CD8-positive, alpha-beta T cell (primary cell): ENCODE measurements at regions of chr17 and their contacts with region 1.

Region 1: GRCh38 chr17:51046514-51047384 is 73.9 kb downstream of the SPAG9 start:
- DNase-seq: no peak
- ATAC-seq: no peak
- H3K4me3 ChIP-seq: no peak overlapping the region
- H3K4me3 Mint-ChIP-seq: no peak overlapping the region
- H3K27ac ChIP-seq: no peak overlapping the region
- H3K27ac Mint-ChIP-seq: no peak overlapping the region
- H3K4me1 ChIP-seq: no peaks in the 10 kb centered on the region
- H3K4me1 Mint-ChIP-seq: peaks cover 13% of the 10 kb centered on the region
- H3K27me3 ChIP-seq: no peaks in the 10 kb centered on the region
- H3K27me3 Mint-ChIP-seq: no peaks in the 10 kb centered on the region
- CTCF ChIP-seq: no peak

Region 2: GRCh38 chr17:50967795-50968194 is 79.0 kb before region 1 on chr17:
- CTCF ChIA-PET with region 1: no interaction called
- POLR2A ChIA-PET with region 1: no interaction called
- intact Hi-C with region 1: no loop called
- DNase-seq: no peak
- ATAC-seq: no peak
- H3K4me3 ChIP-seq: no peak overlapping the region
- H3K4me3 Mint-ChIP-seq: no peak overlapping the region
- H3K27ac ChIP-seq: no peak overlapping the region
- H3K27ac Mint-ChIP-seq: no peak overlapping the region
- H3K4me1 ChIP-seq: no peaks in the 10 kb centered on the region
- H3K4me1 Mint-ChIP-seq: peaks cover 4% of the 10 kb centered on the region
- H3K27me3 ChIP-seq: no peaks in the 10 kb centered on the region
- H3K27me3 Mint-ChIP-seq: no peaks in the 10 kb centered on the region
- CTCF ChIP-seq: no peak

Region 3: DNA sequence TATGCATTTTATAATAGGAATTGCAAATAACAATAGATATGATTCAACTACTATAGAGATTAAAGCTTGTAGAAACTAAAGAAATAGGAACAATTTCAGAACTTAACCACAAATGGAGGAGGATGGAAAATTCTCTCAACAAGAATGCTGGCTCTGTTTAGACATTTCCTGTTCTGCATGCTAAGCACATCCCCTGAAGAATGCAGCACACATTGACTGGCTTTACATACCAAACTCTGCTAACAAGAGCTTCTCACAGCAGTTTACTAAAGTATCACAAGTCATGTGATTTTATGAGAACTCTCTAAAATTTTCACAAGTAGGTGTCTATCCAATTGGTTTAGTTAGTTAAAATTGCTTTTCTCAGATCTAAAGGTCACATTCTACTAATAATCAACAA is 11.3 kb before region 1 on chr17:
- CTCF ChIA-PET with region 1: interaction called, 4 read pairs
- POLR2A ChIA-PET with region 1: no interaction called
- intact Hi-C with region 1: loop called in 1 of 2 experiments (anchors 2 kb)
- DNase-seq: no peak
- ATAC-seq: no peak
- H3K4me3 ChIP-seq: no peak overlapping the region
- H3K4me3 Mint-ChIP-seq: no peak overlapping the region
- H3K27ac ChIP-seq: no peak overlapping the region
- H3K27ac Mint-ChIP-seq: no peak overlapping the region
- H3K4me1 ChIP-seq: peaks cover 1% of the 10 kb centered on the region
- H3K4me1 Mint-ChIP-seq: peaks cover 18% of the 10 kb centered on the region
- H3K27me3 ChIP-seq: no peaks in the 10 kb centered on the region
- H3K27me3 Mint-ChIP-seq: no peaks in the 10 kb centered on the region
- CTCF ChIP-seq: no peak

Region 4: GRCh38 chr17:51056813-51057510 is 10.2 kb after region 1 on chr17:
- CTCF ChIA-PET with region 1: interaction called, 10 read pairs
- POLR2A ChIA-PET with region 1: interaction called, 3 read pairs
- intact Hi-C with region 1: no loop called
- DNase-seq: peak in 2 of 9 experiments; percentile 46 to 61
- ATAC-seq: no peak
- H3K4me3 ChIP-seq: no peak overlapping the region
- H3K4me3 Mint-ChIP-seq: no peak overlapping the region
- H3K27ac ChIP-seq: no peak overlapping the region
- H3K27ac Mint-ChIP-seq: peak overlapping the region; percentile 50
- H3K4me1 ChIP-seq: no peaks in the 10 kb centered on the region
- H3K4me1 Mint-ChIP-seq: peaks cover 14% of the 10 kb centered on the region
- H3K27me3 ChIP-seq: no peaks in the 10 kb centered on the region
- H3K27me3 Mint-ChIP-seq: no peaks in the 10 kb centered on the region
- CTCF ChIP-seq: peak; percentile 48

Region 5: DNA sequence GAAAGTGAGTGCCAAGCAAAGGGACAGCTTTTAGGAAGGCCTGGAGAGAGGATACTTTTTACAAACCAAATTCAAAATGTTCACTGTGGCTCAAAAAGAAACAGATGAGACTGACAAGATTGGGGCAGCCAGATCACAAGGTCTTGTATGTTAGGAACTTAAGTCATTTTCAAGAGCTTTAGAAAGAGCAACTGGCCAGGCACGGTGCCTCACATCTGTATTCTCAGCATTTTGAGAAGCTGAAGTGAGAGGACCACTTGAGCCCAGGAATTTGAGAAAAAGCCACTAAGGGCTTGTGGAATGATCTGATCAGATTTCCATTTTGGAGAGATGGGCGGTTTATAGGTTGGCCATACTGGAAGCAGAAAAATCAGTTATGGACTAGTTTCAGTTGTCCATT is 56.7 kb after region 1 on chr17:
- CTCF ChIA-PET with region 1: no interaction called
- POLR2A ChIA-PET with region 1: no interaction called
- intact Hi-C with region 1: no loop called
- DNase-seq: peak in 1 of 9 experiments; percentile 27
- ATAC-seq: no peak
- H3K4me3 ChIP-seq: no peak overlapping the region
- H3K4me3 Mint-ChIP-seq: no peak overlapping the region
- H3K27ac ChIP-seq: no peak overlapping the region
- H3K27ac Mint-ChIP-seq: no peak overlapping the region
- H3K4me1 ChIP-seq: no peaks in the 10 kb centered on the region
- H3K4me1 Mint-ChIP-seq: peaks cover 21% of the 10 kb centered on the region
- H3K27me3 ChIP-seq: no peaks in the 10 kb centered on the region
- H3K27me3 Mint-ChIP-seq: no peaks in the 10 kb centered on the region
- CTCF ChIP-seq: no peak